ENCODE measurements at regions of chr14 and their contacts with region 1.

Region 1: DNA sequence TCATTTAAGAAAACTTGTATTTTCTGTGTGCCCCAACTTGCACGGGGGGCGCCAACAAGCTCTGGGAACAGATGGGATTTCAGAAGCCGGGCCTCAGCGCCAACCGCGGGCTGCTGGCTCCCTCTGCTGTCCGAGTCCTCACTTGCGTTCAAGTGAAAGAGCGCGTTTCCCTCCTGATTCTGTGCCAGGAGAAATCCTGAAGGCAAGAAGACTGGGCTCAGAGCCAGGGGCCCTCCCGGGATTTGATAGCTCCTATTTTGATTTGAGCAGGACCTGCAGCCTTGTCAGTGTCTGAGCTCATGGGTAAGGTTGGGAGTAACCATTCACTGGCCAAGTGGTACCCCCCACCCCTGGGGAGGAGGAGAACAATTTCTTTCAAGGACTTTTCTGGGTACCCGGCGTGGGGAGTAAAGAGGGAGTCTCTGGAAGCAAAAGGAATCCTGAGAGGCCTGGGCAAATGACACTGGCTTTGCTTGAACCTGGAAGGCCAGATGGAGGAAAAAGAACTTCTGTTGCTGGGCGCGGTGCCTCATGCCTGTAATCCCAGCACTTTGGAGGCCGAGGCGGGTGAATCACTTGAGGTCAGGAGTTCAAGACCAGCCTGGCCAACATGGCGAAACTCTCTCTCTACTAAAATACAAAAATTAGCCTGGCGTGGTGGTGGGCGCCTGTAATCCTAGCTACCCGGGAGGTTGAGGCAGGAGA is 179.0 kb upstream of the RGS6 start:
- DNase-seq: peak; percentile 96
- H3K4me3 Mint-ChIP-seq: no peak overlapping the region
- H3K27ac Mint-ChIP-seq: no peak overlapping the region
- H3K4me1 Mint-ChIP-seq: no peaks in the 10 kb centered on the region
- H3K27me3 Mint-ChIP-seq: no peaks in the 10 kb centered on the region
- CTCF ChIP-seq: peak; percentile 92

Region 2: DNA sequence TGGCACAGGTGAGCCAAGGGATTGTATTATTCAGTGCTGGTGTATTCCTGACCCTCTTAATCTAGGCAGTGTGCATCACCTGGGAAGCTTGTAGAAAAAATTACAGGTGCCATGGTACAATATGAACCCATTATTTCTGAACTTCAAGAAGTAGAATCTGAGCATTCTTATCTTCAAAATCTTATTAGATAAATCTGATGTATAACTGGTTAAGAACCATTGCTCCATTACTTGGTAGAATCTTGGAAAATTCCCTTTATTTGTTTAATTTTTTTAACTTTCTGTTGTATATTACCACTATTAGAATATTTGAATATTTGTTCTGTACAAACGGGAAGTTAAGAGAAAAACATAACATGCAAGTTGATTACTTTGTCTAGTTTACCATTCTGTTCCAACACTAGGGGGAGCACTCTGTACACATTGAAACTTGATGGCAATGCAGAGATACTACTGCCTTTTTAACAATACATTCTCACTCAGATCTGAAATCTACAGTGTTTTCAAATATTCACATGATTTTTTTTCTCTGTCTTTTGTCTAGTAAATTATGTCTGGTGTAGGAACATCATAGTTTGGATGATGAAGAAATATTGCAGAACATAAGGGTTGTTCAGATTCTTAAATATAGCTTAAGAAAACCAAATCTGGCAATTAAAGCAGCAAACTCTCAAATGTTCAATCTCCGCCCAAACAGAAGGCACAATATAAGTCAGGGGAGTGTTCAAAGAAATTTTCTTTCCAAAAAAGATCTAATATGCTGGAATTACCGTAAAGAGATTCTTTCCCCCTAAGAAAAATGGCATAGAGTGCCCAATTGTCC is 649.4 kb before region 1 on chr14:
- CTCF ChIA-PET with region 1: interaction called, 10 read pairs
- POLR2A ChIA-PET with region 1: no interaction called
- intact Hi-C with region 1: loop called (anchors 1 kb)
- DNase-seq: peak; percentile 72
- H3K4me3 Mint-ChIP-seq: no peak overlapping the region
- H3K27ac Mint-ChIP-seq: no peak overlapping the region
- H3K4me1 Mint-ChIP-seq: peaks cover 4% of the 10 kb centered on the region
- H3K27me3 Mint-ChIP-seq: no peaks in the 10 kb centered on the region
- CTCF ChIP-seq: peak; percentile 66

Region 3: DNA sequence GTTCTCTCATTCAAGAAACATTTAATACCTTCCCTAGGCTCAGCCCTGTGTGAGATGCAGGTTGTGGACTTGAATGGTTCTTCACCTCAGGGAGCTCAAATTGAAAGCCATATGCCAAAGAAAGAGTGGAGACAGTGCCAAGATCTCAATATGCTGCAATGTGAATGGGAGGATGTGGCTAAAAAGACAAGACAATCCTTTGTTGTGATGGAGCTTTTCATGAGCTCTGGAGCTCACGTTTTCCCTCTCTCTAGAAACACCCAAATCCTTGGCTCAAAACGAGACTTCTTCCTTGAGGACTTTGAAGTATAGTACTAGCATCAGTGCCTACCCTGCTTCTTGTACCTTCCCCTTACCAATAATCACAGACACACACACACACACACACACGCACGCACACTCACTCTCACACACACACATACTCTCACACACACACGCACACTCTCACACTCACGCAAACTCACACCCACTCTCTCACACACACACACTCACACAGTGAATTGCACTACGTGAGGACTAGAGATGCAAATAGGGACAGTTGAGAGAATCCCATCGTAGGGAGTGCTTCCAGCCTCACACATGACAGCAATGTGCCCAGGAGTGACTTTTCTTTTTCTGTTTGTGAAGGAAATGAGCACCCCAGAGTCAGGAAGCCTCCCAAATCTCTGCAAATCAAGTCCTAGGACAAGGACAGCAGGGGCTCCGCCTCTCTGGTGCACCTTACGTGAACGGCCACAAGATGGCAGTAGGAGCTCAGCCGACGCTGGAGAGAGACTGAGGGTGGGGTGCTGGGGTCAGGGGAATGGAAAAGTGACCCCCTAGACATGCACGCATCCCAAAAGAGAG is 614.6 kb before region 1 on chr14:
- CTCF ChIA-PET with region 1: interaction called, 156 read pairs
- POLR2A ChIA-PET with region 1: interaction called, 3 read pairs
- intact Hi-C with region 1: loop called (anchors 1 kb)
- DNase-seq: peak; percentile 62
- H3K4me3 Mint-ChIP-seq: no peak overlapping the region
- H3K27ac Mint-ChIP-seq: no peak overlapping the region
- H3K4me1 Mint-ChIP-seq: peaks cover 13% of the 10 kb centered on the region
- H3K27me3 Mint-ChIP-seq: no peaks in the 10 kb centered on the region
- CTCF ChIP-seq: peak; percentile 96

Region 4: DNA sequence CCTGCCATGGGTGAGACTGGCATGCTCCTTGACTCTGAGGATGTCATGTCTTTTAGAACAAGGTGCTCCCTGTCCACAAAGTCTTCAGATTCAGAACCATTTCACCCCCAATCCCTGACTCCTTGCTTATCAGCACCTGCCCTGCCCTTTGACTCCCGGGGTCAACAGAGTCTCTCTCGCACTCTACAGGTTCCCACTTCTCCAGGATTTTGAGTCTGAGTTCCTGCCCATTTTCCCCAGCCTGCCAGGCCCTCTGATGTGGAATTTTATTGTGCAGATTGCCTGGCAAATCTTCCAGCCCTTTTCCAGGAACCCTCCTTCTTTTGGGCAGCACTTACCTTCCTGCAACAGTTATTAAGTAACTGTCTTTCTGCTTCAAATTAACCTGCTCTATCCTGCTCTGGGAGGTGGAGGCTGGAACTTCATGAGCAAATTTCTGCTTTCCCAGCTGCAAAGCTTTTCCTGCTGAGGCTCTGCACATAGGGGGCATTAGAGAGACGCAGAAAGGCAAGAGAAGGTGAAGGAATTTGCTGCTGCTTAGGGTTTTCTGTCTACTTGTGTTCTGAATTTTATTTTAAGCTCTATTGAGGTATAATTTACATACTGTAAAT is 587.0 kb before region 1 on chr14:
- CTCF ChIA-PET with region 1: interaction called, 6 read pairs
- POLR2A ChIA-PET with region 1: interaction called, 3 read pairs
- intact Hi-C with region 1: loop called (anchors 1 kb)
- DNase-seq: peak; percentile 76
- H3K4me3 Mint-ChIP-seq: no peak overlapping the region
- H3K27ac Mint-ChIP-seq: no peak overlapping the region
- H3K4me1 Mint-ChIP-seq: peaks cover 12% of the 10 kb centered on the region
- H3K27me3 Mint-ChIP-seq: no peaks in the 10 kb centered on the region
- CTCF ChIP-seq: peak; percentile 38

Region 5: DNA sequence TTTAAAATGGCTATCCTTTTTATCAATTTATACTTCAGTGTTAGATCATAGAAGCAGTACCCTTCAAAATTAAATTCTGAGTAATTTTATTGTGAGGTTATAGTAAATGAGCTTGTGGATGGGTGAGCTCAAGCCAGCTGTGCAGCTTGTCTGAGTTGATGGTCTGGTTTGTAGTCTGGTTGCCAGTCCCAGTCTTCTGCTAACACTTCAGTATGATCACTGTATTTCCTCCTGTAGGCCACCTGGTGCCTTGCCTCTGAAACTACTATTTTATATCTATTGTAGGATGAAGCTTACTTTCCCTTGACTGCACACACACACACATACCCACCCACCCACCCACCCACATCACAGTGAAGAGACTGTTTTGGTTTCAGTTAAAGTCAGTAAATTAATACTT is 349.6 kb before region 1 on chr14:
- CTCF ChIA-PET with region 1: no interaction called
- POLR2A ChIA-PET with region 1: no interaction called
- intact Hi-C with region 1: loop called (anchors 5 kb)
- DNase-seq: peak; percentile 42
- H3K4me3 Mint-ChIP-seq: no peak overlapping the region
- H3K27ac Mint-ChIP-seq: no peak overlapping the region
- H3K4me1 Mint-ChIP-seq: no peaks in the 10 kb centered on the region
- H3K27me3 Mint-ChIP-seq: no peaks in the 10 kb centered on the region
- CTCF ChIP-seq: peak; percentile 18

Region 6: DNA sequence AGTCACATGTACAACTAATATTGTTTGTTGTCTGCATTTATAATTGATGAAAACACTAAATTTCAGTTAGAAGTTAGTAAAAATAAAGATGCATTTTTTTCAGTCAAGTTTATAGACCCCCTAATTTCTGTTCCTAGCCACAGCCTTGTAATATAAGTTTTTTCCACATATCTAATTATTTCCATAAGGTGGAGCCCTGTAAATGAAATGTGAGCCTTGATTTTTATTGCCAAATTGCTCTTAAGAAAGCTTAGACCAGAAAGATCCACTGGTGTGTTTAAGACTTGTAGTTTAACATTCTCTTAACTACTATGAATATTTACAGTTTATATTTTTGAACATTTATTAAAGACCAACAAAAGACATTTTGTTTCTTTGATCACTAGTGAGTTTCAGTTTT is 143.1 kb before region 1 on chr14:
- CTCF ChIA-PET with region 1: no interaction called
- POLR2A ChIA-PET with region 1: no interaction called
- intact Hi-C with region 1: no loop called
- DNase-seq: no peak
- H3K4me3 Mint-ChIP-seq: no peak overlapping the region
- H3K27ac Mint-ChIP-seq: no peak overlapping the region
- H3K4me1 Mint-ChIP-seq: peaks cover 6% of the 10 kb centered on the region
- H3K27me3 Mint-ChIP-seq: no peaks in the 10 kb centered on the region
- CTCF ChIP-seq: no peak

Region 7: GRCh38 chr14:71705460-71705859 is 47.8 kb before region 1 on chr14:
- CTCF ChIA-PET with region 1: no interaction called
- POLR2A ChIA-PET with region 1: no interaction called
- intact Hi-C with region 1: no loop called
- DNase-seq: no peak
- H3K4me3 Mint-ChIP-seq: no peak overlapping the region
- H3K27ac Mint-ChIP-seq: no peak overlapping the region
- H3K4me1 Mint-ChIP-seq: peaks cover 6% of the 10 kb centered on the region
- H3K27me3 Mint-ChIP-seq: no peaks in the 10 kb centered on the region
- CTCF ChIP-seq: no peak

Region 8: GRCh38 chr14:71720978-71721624 is 32.2 kb before region 1 on chr14:
- CTCF ChIA-PET with region 1: interaction called, 12 read pairs
- POLR2A ChIA-PET with region 1: no interaction called
- intact Hi-C with region 1: loop called (anchors 1 kb)
- DNase-seq: peak; percentile 79
- H3K4me3 Mint-ChIP-seq: no peak overlapping the region
- H3K27ac Mint-ChIP-seq: peak overlapping the region; percentile 88
- H3K4me1 Mint-ChIP-seq: peaks cover 17% of the 10 kb centered on the region
- H3K27me3 Mint-ChIP-seq: no peaks in the 10 kb centered on the region
- CTCF ChIP-seq: peak; percentile 53

Region 9: GRCh38 chr14:71855399-71856036 is 102.2 kb after region 1 on chr14:
- CTCF ChIA-PET with region 1: interaction called, 15 read pairs
- POLR2A ChIA-PET with region 1: no interaction called
- intact Hi-C with region 1: loop called (anchors 1 kb)
- DNase-seq: peak; percentile 87
- H3K4me3 Mint-ChIP-seq: no peak overlapping the region
- H3K27ac Mint-ChIP-seq: no peak overlapping the region
- H3K4me1 Mint-ChIP-seq: peaks cover 10% of the 10 kb centered on the region
- H3K27me3 Mint-ChIP-seq: peaks cover 42% of the 10 kb centered on the region
- CTCF ChIP-seq: peak; percentile 75

Measured in MCF 10A (cell line).